Naive thymus-derived CD8-positive, alpha-beta T cell (primary cell): ENCODE measurements at regions of chr22 and their contacts with region 1.

Region 1: DNA sequence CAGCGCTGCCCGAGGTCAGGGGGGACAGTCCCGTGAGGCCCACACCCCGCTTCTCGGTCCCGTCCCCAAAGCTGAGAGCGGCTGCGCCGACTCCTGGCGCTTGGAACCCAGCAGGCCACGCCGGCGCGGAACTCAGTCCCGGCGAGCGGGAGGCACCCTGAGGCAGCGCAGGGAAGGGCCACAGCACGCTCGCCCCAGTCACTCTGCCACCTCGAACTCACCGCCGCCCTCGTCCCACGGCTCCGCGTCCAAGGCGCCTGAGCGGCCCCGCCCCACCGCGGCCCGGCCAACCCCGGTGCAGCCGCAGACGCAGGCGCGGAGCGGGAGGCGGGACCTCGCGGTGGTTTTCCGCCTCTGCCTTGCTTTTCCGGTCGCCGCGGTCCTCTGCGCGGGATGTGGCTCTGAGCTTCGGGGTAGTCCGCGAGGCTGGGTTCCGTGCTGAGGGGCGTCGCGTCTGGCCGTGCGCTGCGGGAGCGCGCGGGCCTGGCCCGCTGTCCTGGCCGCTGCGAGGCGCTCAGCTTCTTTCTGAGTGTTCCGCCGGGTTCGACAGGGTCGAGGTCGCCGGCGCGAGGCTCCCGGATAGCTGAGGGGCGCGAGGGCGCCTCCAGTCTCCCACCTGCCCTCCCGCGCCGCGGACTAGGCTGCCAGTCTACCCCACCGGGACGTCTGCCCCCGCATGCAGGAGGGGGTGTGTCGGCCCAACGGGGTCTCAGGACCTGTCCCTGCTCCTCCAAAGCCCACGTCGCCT is at the start of gene CDPF1:
- DNase-seq: peak; percentile 80 to 91 (median 86)
- ATAC-seq: peak; percentile 92 to 95
- H3K4me3 Mint-ChIP-seq: peak within 1 kb of the TSS; percentile 76 to 91 (median 84)
- H3K27ac Mint-ChIP-seq: peak within 1 kb of the TSS; percentile 51 to 87 (median 81)
- H3K4me1 Mint-ChIP-seq: peaks cover 6 to 43% (median 32%) of the 10 kb centered on the region in 4 donors
- H3K27me3 Mint-ChIP-seq: no peaks in the 10 kb centered on the region
- polyA plus RNA-seq, gene CDPF1: 22.9 to 29.3 (median 29.1) TPM

Region 2: DNA sequence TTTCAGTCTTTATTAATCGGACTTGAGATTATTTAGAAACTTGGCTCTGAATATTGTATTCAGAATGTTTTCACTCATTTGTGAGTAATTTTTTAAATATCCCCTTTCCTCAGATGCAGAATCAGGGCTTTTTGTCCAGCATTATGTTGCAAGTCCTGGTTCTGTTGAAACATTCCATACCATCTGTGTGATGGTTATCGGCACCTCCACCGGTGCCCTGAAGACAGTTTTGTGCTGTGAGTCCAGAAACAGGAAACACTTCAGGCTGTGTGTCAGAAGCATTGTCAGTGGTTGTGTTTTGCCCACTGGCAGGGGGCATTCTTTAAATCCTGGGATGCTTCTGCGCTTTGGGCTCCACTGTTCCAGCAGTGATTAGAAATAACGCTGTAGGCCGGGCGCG is 20.5 kb before region 1 on chr22:
- POLR2A ChIA-PET with region 1: no interaction called
- DNase-seq: peak in 1 of 10 donors; percentile 42
- ATAC-seq: no peak
- H3K4me3 Mint-ChIP-seq: no peak overlapping the region
- H3K27ac Mint-ChIP-seq: peak overlapping the region in 1 of 10 donors; percentile 31
- H3K4me1 Mint-ChIP-seq: peaks cover 0 to 4% (median 0%) of the 10 kb centered on the region in 4 donors
- H3K27me3 Mint-ChIP-seq: no peaks in the 10 kb centered on the region

Region 3: GRCh38 chr22:46296257-46297150 is 46.3 kb after region 1 on chr22 and contains the start of gene GTSE1:
- POLR2A ChIA-PET with region 1: interaction called, 11 read pairs
- DNase-seq: peak; percentile 90 to 99 (median 96)
- ATAC-seq: peak; percentile 98 to 99
- H3K4me3 Mint-ChIP-seq: peak within 1 kb of the TSS; percentile 82 to 96 (median 90)
- H3K27ac Mint-ChIP-seq: peak within 1 kb of the TSS; percentile 93 to 99 (median 98)
- H3K4me1 Mint-ChIP-seq: peaks cover 15 to 44% (median 33%) of the 10 kb centered on the region in 4 donors
- H3K27me3 Mint-ChIP-seq: peaks cover 2 to 26% (median 15%) of the 10 kb centered on the region in 5 donors
- polyA plus RNA-seq, gene GTSE1: not detected

Region 4: DNA sequence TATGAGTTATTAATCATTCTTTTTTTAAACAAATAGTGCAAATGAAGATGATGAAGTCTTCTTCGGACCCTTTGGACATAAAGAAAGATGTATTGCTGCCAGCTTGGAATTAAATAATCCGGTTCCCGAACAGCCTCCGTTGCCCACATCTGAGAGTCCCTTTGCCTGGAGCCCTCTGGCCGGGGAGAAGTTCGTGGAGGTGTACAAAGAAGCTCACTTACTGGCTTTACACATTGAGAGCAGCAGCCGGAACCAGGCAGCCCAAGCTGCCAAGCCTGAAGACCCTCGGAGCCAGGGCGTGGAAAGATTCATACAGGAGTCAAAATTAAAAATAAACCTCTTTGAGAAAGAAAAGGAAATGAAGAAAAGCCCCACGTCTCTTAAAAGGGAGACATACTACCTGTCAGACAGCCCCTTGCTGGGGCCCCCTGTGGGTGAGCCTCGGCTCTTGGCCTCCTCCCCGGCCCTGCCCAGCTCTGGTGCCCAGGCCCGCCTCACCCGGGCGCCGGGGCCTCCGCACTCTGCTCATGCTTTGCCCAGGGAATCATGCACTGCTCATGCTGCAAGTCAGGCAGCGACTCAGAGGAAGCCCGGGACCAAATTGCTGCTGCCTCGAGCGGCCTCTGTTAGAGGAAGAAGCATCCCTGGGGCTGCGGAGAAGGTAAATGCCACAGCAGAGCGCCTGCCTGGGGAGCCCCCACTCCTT is 58.2 kb after region 1 on chr22:
- POLR2A ChIA-PET with region 1: no interaction called
- DNase-seq: peak in 1 of 10 donors; percentile 49
- ATAC-seq: no peak
- H3K4me3 Mint-ChIP-seq: no peak overlapping the region
- H3K27ac Mint-ChIP-seq: no peak overlapping the region
- H3K4me1 Mint-ChIP-seq: no peaks in the 10 kb centered on the region
- H3K27me3 Mint-ChIP-seq: no peaks in the 10 kb centered on the region